ENCODE measurements at regions of chr14 and their contacts with region 1.

Region 1: DNA sequence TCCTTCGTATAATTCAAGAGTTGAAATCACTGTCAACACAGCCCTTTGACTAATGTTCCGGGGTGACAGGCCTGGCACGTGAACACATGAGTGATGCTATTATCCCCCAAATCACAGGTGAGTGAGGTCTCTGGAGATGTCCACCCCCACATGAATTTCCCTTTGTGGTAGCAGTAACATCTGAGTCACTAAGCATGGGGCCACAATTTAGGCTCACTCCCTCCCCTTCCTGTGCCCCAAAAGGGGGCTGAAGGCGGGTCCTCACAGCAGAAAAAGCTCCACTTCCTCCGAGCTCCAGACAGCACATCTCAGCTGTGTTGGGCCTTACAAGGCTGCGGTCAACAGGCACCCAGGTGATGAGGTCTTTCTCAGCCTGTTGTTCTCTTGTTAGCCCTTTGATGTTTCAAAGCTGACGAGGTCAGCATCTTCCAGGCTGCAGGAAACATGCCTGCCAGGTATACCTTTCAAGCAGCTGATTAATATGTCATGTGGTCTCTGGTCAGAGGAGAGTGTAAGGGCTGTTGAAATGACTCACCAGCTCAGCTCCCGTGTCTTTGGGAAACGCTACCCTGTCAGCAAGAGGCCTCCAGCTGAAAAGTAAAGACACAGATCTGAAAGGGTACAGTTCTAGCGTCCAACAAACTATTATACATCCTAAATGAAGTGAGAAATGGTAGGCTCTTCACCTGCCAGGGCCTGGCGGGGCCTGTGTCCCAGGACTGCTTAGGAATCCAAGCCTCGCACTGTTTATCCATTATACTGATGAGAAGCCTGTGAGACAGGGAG is 107.3 kb downstream of the ZFP36L1 start:
- DNase-seq: peak; percentile 92
- H3K4me3 Mint-ChIP-seq: peak overlapping the region; percentile 47
- H3K27ac Mint-ChIP-seq: peak overlapping the region; percentile 93
- H3K4me1 Mint-ChIP-seq: peaks cover 59% of the 10 kb centered on the region
- H3K27me3 Mint-ChIP-seq: no peaks in the 10 kb centered on the region

Region 2: GRCh38 chr14:68210729-68211299 is 474.8 kb before region 1 on chr14:
- CTCF ChIA-PET with region 1: no interaction called
- POLR2A ChIA-PET with region 1: interaction called, 6 read pairs
- intact Hi-C with region 1: loop called (anchors 1 kb)
- DNase-seq: peak; percentile 66
- H3K4me3 Mint-ChIP-seq: peak overlapping the region; percentile 56
- H3K27ac Mint-ChIP-seq: peak overlapping the region; percentile 64
- H3K4me1 Mint-ChIP-seq: peaks cover 47% of the 10 kb centered on the region
- H3K27me3 Mint-ChIP-seq: no peaks in the 10 kb centered on the region

Region 3: DNA sequence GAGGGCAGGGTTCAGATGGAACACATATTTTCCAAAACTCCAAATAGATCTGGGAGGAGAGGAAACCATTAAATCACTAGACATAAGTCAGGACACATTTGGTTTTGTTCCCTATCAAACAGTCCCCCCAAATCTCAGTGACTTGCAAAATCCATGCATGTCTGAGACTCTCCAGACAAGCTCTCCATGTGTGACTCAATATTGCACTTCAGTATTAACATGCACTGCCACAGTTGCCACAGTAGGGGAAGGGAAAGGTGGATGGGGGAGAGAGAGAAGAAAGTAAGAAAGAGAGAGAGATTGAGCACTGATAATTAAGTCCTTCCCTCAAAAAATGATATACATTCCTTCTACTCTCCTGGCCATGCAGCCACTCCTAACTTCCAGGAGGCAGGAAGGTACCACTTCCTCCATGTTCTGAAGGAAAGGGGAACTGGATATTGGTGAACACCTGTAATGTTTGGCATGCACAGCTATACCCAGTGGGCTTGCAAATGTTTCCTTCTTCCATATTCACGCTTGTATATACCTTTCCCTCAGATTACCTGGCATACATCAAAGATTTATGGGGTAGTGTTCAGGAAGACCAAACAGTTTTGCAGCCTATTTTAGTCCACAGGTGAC is 202.7 kb before region 1 on chr14:
- CTCF ChIA-PET with region 1: no interaction called
- POLR2A ChIA-PET with region 1: no interaction called
- intact Hi-C with region 1: loop called (anchors 5 kb)
- DNase-seq: no peak
- H3K4me3 Mint-ChIP-seq: no peak overlapping the region
- H3K27ac Mint-ChIP-seq: no peak overlapping the region
- H3K4me1 Mint-ChIP-seq: peaks cover 42% of the 10 kb centered on the region
- H3K27me3 Mint-ChIP-seq: no peaks in the 10 kb centered on the region

Region 4: GRCh38 chr14:68718023-68718995 is 32.7 kb after region 1 on chr14:
- CTCF ChIA-PET with region 1: interaction called, 3 read pairs
- POLR2A ChIA-PET with region 1: interaction called, 6 read pairs
- intact Hi-C with region 1: loop called (anchors 1 kb)
- DNase-seq: peak; percentile 46
- H3K4me3 Mint-ChIP-seq: no peak overlapping the region
- H3K27ac Mint-ChIP-seq: no peak overlapping the region
- H3K4me1 Mint-ChIP-seq: peaks cover 40% of the 10 kb centered on the region
- H3K27me3 Mint-ChIP-seq: no peaks in the 10 kb centered on the region

Region 5: GRCh38 chr14:68780358-68781160 is 94.9 kb after region 1 on chr14:
- CTCF ChIA-PET with region 1: interaction called, 6 read pairs
- POLR2A ChIA-PET with region 1: interaction called, 13 read pairs
- intact Hi-C with region 1: loop called (anchors 1 kb)
- DNase-seq: peak; percentile 55
- H3K4me3 Mint-ChIP-seq: peak overlapping the region; percentile 71
- H3K27ac Mint-ChIP-seq: peak overlapping the region; percentile 80
- H3K4me1 Mint-ChIP-seq: peaks cover 78% of the 10 kb centered on the region
- H3K27me3 Mint-ChIP-seq: no peaks in the 10 kb centered on the region

Region 6: DNA sequence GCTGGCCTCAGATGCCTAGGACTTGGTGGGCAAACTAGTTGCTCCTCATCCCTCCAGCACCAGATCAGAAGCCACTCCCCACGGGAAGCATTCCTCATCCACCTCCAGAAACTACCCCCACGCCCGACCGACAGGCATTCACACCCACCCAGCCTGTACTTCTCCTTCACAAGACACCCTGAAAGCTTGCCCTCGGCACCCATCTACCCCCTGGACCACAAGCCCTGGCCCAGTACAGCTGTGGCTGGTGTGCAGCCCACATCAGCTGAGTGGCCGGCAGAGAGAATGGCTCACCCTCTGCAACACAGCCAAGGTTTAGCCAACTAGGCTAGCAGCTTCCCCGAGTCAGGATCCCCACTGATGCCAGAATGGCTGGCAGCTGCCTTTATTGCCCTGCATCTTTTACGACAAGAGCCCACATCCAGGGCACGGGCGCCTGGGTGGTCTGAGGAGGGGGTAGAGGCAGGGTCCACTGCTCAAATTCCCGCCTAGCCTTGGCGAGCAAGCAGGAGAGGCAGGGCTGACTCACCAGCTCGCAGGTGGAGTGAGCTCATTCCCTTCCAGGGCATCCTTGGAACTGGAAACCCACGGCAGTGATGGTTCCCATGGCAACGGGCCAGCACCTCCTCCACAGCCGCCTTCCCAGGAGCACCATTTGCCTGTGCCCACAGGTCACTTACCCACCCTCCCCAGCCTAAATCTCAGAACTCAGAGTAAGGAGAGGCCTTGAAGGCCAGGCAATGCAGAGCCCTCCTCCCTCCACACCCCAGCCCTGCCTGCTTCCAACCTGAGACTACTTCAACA is 276.4 kb after region 1 on chr14:
- CTCF ChIA-PET with region 1: no interaction called
- POLR2A ChIA-PET with region 1: no interaction called
- intact Hi-C with region 1: no loop called
- DNase-seq: no peak
- H3K4me3 Mint-ChIP-seq: no peak overlapping the region
- H3K27ac Mint-ChIP-seq: no peak overlapping the region
- H3K4me1 Mint-ChIP-seq: peaks cover 42% of the 10 kb centered on the region
- H3K27me3 Mint-ChIP-seq: no peaks in the 10 kb centered on the region

Measured in activated CD4-positive, alpha-beta memory T cell treated with anti-CD3 and anti-CD28 coated beads for 36 hours (primary cell).